ENCODE measurements at regions of chr18 and their contacts with region 1.

Region 1: GRCh38 chr18:65671621-65672415 is 79.0 kb upstream of the CDH7 start:
- DNase-seq: no peak
- ATAC-seq: no peak
- H3K4me3 ChIP-seq: no peak overlapping the region
- H3K27ac ChIP-seq: no peak overlapping the region
- H3K4me1 ChIP-seq: no peaks in the 10 kb centered on the region
- H3K27me3 ChIP-seq: no peaks in the 10 kb centered on the region
- CTCF ChIP-seq: no peak

Region 2: DNA sequence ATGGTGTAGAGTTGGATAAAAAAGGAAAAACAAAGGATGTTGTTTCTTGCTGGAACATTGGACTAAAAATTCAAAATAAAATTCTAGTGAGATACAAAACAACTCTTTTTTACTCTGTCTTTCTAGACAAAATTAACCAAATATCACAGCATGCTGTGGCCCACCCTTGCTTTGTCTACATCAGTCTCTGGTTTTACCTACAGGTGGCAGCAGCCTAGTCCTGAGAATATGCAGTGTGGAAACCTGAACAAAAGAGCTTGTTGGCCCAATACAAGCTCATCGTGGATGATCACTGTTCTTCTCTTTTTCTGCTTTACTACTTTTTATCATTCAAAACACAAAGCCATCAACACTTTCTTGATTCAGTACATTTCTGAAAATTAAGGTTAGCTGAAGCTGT is 721.6 kb after region 1 on chr18:
- intact Hi-C with region 1: loop called in 1 of 10 experiments (anchors 10 kb)
- DNase-seq: no peak
- ATAC-seq: no peak
- H3K4me3 ChIP-seq: no peak overlapping the region
- H3K27ac ChIP-seq: no peak overlapping the region
- H3K4me1 ChIP-seq: no peaks in the 10 kb centered on the region
- H3K27me3 ChIP-seq: no peaks in the 10 kb centered on the region
- CTCF ChIP-seq: no peak